Activated CD8-positive, alpha-beta memory T cell treated with anti-CD3 and anti-CD28 coated beads, Interleukin-2, amount 10 ng/mL, durations not matched to agents 7 days and 5 days (primary cell): ENCODE measurements at regions of chr17 and their contacts with region 1.

Region 1: DNA sequence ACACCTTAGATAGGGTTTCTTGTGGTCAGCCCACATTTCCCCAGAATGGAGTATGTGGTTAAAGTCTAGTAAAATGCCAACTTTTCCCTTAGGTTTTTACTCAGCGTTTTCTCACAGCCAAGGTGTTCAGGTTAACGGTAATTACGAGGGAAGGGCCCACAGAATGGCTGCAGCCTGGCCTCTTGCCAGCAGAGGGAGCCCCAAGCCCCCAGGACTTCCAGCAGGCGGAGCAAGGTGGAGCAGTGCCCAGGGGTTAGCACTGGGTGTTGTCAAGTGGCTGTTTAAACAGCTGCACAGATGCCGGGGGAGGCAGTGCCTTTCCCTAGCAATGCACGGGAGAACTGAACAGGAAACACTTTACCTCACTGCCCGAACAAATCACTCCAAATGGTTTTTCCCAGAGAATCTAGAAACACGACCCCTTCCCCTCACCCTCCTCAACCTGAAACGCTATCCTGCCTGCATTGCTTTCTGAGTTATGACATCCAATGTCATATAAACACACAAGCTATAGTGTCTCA is 6.6 kb downstream of the PHB1 start:
- DNase-seq: peak; percentile 90
- ATAC-seq: peak; percentile 94
- H3K4me3 Mint-ChIP-seq: no peak overlapping the region
- H3K27ac Mint-ChIP-seq: peak overlapping the region; percentile 58
- H3K4me1 Mint-ChIP-seq: peaks cover 51% of the 10 kb centered on the region
- H3K27me3 Mint-ChIP-seq: no peaks in the 10 kb centered on the region

Region 2: GRCh38 chr17:49496183-49496866 is 88.3 kb after region 1 on chr17:
- CTCF ChIA-PET with region 1: interaction called, 13 read pairs
- DNase-seq: peak; percentile 86
- ATAC-seq: peak; percentile 85
- H3K4me3 Mint-ChIP-seq: peak overlapping the region; percentile 52
- H3K27ac Mint-ChIP-seq: no peak overlapping the region
- H3K4me1 Mint-ChIP-seq: peaks cover 22% of the 10 kb centered on the region
- H3K27me3 Mint-ChIP-seq: peaks cover 80% of the 10 kb centered on the region

Region 3: DNA sequence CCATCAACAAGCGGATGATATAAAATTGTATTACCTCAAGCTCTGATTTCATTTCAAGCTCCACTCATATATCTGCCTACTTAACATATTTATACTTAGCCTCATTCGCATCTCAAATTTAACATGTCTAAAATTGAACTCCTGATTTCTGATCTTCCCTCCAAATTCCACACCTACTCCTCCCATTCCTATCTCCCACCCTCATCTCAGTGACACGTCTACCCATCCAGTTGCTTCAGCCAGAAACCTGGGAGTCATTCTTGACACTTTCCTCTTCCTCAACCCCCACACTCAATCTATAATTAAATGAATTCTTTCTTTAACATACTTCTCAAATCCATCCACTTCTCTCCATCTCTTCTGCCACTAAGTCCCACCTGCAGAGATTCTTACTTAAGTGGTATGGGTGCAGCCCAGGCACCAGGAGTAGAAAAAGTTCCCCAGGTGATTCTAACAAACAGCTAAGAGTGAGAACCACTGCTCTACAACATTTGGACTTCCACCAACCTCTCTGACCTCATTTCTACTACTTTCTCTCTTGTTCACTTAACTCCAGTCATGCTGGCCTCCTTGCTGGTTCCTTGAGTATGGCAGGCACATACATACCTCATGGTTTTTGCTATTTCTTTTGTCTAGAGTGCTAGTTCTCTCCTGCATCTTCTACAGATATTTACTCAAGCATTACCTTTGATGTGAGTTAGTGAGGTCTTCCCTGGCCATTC is 251.8 kb after region 1 on chr17:
- CTCF ChIA-PET with region 1: no interaction called
- DNase-seq: no peak
- ATAC-seq: no peak
- H3K4me3 Mint-ChIP-seq: no peak overlapping the region
- H3K27ac Mint-ChIP-seq: no peak overlapping the region
- H3K4me1 Mint-ChIP-seq: peaks cover 19% of the 10 kb centered on the region
- H3K27me3 Mint-ChIP-seq: no peaks in the 10 kb centered on the region